ENCODE measurements at regions of chr14 and their contacts with region 1.

Region 1: DNA sequence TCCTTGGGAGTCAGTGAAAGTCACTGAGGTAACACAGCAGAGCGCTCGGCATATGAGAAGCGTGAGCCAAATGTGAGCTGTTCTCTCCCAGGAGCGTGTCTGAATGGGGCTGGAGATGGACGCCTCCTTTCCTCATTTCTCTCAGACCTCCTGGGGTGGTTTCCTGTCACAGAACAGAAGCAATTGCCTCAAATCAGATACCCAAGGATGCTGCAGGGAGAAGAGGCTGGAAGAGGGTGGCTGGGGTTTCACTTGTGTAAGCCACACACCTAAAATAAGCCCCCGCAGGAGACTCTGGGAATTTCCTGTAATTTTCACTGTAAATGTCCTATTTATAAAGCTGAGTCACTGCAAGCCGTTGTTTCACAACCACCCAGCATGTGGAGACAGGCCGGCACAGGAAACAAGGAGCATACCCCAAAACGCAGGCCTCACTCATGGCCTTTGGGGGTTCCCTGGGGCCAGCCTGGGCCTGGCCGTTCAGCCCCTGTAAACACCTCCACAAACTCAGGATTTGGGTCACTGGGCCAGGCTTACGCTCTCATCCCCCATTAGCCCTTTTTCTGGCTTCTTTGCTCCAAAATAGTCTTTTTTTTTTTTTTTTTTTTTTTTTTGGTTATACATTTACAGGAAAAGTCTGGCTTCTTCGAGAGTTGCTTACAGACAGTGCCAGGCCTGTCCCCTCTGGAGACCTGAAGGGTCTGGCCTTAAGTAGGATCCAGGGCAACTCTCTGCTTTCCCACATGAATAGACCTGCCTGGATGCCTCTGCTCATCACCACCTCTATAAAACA is 55.3 kb downstream of the VCPKMT start:
- DNase-seq: peak; percentile 97
- H3K4me3 ChIP-seq: no peak overlapping the region
- H3K27ac ChIP-seq: peak overlapping the region; percentile 93
- H3K4me1 ChIP-seq: peaks cover 42% of the 10 kb centered on the region
- H3K27me3 ChIP-seq: no peaks in the 10 kb centered on the region
- CTCF ChIP-seq: 0 out of 2 replicates have a peak, but pooled peaks have one; percentile 13

Region 2: DNA sequence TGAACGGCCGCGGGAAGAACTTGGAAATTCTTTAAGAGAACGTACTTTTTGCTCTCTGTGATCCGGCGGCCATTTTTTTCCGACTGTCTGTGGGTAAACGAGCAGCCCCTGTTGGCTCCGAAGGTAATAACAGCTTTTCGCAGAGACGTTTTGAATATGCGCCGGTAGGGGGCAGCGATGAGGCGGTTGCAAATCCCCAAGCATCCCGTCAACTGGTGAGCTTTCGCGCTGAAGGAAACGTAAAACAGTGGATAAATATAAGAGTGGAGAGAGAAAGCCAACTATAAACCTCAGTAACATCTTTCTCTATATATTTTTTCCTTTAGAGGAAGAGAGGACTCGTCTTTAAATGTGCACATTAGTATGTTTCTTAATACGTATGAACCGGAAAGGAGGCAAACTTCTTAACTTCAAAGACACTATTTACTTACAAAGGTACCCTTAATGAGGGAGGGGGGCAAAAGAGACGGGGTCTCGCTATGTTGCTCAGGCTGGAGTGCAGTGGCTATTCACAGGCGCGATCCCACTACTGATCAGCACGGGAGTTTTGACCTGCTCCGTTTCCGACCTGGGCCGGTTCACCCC is 198.9 kb before region 1 on chr14:
- CTCF ChIA-PET with region 1: interaction called, 12 read pairs
- POLR2A ChIA-PET with region 1: no interaction called
- intact Hi-C with region 1: loop called (anchors 1 kb)
- DNase-seq: peak; percentile 95
- H3K4me3 ChIP-seq: peak overlapping the region; percentile 58
- H3K27ac ChIP-seq: peak overlapping the region; percentile 93
- H3K4me1 ChIP-seq: peaks cover 11% of the 10 kb centered on the region
- H3K27me3 ChIP-seq: no peaks in the 10 kb centered on the region
- CTCF ChIP-seq: peak; percentile 100

Region 3: GRCh38 chr14:49892636-49893308 is 168.3 kb before region 1 on chr14 and contains the start of gene ARF6:
- CTCF ChIA-PET with region 1: no interaction called
- POLR2A ChIA-PET with region 1: no interaction called
- intact Hi-C with region 1: loop called (anchors 2 kb)
- DNase-seq: peak; percentile 98
- H3K4me3 ChIP-seq: peak within 1 kb of the TSS; percentile 84
- H3K27ac ChIP-seq: peak within 1 kb of the TSS; percentile 99
- H3K4me1 ChIP-seq: peaks cover 15% of the 10 kb centered on the region
- H3K27me3 ChIP-seq: no peaks in the 10 kb centered on the region
- CTCF ChIP-seq: no peak; the same call in 1 of the 2 replicates
- total RNA-seq, gene ARF6: 59.2 and 67.6 TPM in 2 replicates

Region 4: DNA sequence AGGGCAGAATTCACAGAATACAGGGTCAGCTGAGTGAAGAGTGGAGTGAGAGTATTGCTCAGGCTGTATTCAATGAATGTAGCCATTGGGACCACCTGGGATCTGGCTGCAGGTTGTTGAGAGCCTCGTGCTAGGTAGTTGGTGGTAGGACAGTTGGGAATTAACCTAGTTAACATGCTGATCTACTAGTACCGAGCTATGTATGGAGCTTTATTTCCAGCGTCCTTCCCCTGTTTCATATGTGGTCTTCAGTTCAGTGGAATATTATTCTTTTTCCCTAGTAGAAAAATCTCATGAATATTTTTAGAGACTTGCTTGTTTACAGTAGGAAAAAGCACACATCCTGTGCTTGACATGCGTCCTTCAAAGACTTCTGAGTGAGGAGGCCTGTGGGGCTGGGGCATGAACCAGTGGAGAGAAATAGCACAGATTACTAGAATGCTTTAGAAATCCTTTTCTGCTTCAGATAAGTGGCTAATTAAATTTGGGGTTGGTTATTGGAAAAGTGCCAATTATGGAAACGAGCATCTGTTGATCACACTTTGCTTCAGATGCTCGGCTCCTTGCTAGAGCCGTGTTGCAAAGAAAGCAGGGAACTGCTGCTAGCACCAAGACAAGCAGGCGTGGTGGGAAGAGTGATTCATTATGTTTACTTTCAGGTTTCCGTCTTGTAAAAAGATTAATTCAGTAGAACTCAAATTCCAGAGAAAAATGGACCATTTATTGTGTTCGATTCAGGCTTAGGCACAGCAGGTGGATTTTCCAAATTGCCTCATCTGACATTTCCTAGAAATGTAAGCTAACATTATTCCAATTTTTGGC is 114.5 kb before region 1 on chr14:
- CTCF ChIA-PET with region 1: no interaction called
- POLR2A ChIA-PET with region 1: no interaction called
- intact Hi-C with region 1: loop called (anchors 1 kb)
- DNase-seq: peak; percentile 94
- H3K4me3 ChIP-seq: peak overlapping the region; percentile 3
- H3K27ac ChIP-seq: peak overlapping the region; percentile 51
- H3K4me1 ChIP-seq: peaks cover 44% of the 10 kb centered on the region
- H3K27me3 ChIP-seq: no peaks in the 10 kb centered on the region
- CTCF ChIP-seq: no peak

Region 5: DNA sequence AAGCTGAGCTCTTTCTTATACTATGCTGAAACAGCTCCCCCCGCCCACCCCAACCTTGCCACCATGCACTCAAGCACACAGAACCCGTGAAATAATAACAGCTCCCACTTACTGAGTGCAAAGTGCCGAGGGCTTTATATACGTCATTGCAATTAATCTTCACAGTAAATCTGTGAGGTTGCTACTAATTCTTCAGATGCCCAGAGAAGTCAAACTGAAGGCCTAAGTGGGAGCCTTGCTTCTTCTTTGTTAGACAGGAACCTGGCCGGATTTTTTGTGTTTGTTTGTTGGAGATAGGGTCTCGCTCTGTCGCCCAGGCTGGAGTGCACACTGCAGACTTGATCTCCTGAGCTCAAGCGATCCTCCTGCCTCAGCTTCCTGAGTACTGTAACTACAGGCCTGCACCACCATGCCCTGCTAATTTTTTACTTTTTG is 21.3 kb after region 1 on chr14:
- CTCF ChIA-PET with region 1: no interaction called
- POLR2A ChIA-PET with region 1: no interaction called
- intact Hi-C with region 1: no loop called
- DNase-seq: no peak
- H3K4me3 ChIP-seq: no peak overlapping the region
- H3K27ac ChIP-seq: no peak overlapping the region
- H3K4me1 ChIP-seq: no peaks in the 10 kb centered on the region
- H3K27me3 ChIP-seq: no peaks in the 10 kb centered on the region
- CTCF ChIP-seq: no peak

Region 6: GRCh38 chr14:50173891-50174290 is 112.8 kb after region 1 on chr14:
- CTCF ChIA-PET with region 1: no interaction called
- POLR2A ChIA-PET with region 1: no interaction called
- intact Hi-C with region 1: no loop called
- DNase-seq: no peak
- H3K4me3 ChIP-seq: no peak overlapping the region
- H3K27ac ChIP-seq: no peak overlapping the region
- H3K4me1 ChIP-seq: no peaks in the 10 kb centered on the region
- H3K27me3 ChIP-seq: no peaks in the 10 kb centered on the region
- CTCF ChIP-seq: no peak

Region 7: DNA sequence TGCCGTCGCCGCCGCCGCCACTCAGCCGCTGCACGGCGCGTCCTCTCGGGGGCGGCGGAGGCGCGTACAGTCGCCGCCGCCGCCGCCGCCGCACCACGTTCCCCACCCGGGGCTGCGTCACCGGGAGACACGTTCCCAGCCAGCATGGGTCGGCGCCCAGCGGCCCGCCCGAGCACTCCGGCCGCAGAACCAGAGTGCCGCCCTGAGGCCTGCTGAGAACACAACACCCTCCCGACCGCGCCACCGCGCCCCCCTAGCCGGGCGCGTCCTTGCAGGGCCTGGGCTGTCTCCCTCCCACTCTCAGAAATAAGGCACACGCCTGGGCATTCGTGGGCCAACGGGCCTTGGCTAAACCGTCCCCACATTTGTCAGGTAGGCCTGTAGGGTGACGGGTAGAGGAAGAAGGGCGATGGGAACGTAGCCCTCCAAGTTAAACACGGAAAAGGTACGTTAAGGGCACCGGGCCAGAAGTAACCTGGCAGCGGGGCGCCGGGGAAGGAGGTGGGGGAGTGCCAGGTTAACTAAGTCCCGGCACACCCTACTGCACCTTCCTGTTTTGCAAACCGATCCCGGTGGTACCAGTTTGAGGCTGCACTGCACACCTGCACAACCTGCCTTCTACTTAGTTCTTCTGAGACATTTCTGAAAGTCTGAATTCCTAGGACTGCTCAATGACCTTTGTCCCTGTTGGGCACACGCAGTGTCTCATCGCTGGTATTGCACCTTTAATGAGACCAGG is 471.6 kb after region 1 on chr14 and contains the start of gene MAP4K5:
- CTCF ChIA-PET with region 1: no interaction called
- POLR2A ChIA-PET with region 1: no interaction called
- intact Hi-C with region 1: loop called (anchors 5 kb)
- DNase-seq: peak; percentile 95
- H3K4me3 ChIP-seq: peak within 1 kb of the TSS; percentile 91
- H3K27ac ChIP-seq: peak within 1 kb of the TSS; percentile 90
- H3K4me1 ChIP-seq: peaks cover 18% of the 10 kb centered on the region
- H3K27me3 ChIP-seq: no peaks in the 10 kb centered on the region
- CTCF ChIP-seq: peak; percentile 88
- total RNA-seq, gene MAP4K5: 57.9 and 58.9 TPM in 2 replicates

Region 8: DNA sequence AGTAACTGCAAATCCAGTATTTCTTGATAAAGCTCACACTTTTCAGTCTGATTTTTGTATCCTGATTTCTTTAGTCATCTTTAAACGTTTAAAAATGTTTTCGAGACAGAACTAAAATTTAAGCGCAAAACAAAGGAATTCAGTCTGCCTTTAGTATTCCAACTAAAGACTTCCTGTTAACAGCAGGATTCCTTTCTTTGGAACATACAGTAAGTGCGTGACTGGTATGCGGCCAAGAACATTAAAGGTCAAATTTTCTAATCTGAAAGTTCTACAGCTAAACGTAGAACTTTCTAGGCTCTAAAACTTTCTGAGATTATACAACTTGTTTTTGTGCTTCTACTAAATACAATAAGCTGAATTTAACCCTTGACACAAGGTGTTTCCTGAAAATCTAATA is 597.1 kb after region 1 on chr14:
- CTCF ChIA-PET with region 1: no interaction called
- POLR2A ChIA-PET with region 1: no interaction called
- intact Hi-C with region 1: no loop called
- DNase-seq: peak; percentile 95
- H3K4me3 ChIP-seq: peak overlapping the region; percentile 9
- H3K27ac ChIP-seq: peak overlapping the region; percentile 83
- H3K4me1 ChIP-seq: peaks cover 31% of the 10 kb centered on the region
- H3K27me3 ChIP-seq: no peaks in the 10 kb centered on the region
- CTCF ChIP-seq: no peak